Esophagus squamous epithelium (tissue), 5 donors: ENCODE measurements at regions of chr5 and their contacts with region 1.

Region 1: GRCh38 chr5:54249210-54250028 is 61.0 kb downstream of the ARL15 start:
- DNase-seq: no peak
- H3K4me3 ChIP-seq: no peak overlapping the region
- H3K27ac ChIP-seq: no peak overlapping the region
- H3K4me1 ChIP-seq: peaks cover 0 to 27% (median 0%) of the 10 kb centered on the region in 3 donors
- H3K27me3 ChIP-seq: no peaks in the 10 kb centered on the region
- CTCF ChIP-seq: no peak
- POLR2A ChIP-seq: no peak

Region 2: GRCh38 chr5:54309691-54310432 is 60.4 kb after region 1 on chr5:
- intact Hi-C with region 1: loop called (anchors 10 kb)
- DNase-seq: no peak
- H3K4me3 ChIP-seq: peak overlapping the region; percentile 77 to 99 (median 87)
- H3K27ac ChIP-seq: peak overlapping the region; percentile 85 to 96 (median 88)
- H3K4me1 ChIP-seq: peaks cover 6 to 29% (median 11%) of the 10 kb centered on the region in 3 donors
- H3K27me3 ChIP-seq: no peaks in the 10 kb centered on the region
- CTCF ChIP-seq: no peak
- POLR2A ChIP-seq: no peak